Common myeloid progenitor, CD34-positive (primary cell): ENCODE measurements at regions of chr12 and their contacts with region 1.

Region 1: DNA sequence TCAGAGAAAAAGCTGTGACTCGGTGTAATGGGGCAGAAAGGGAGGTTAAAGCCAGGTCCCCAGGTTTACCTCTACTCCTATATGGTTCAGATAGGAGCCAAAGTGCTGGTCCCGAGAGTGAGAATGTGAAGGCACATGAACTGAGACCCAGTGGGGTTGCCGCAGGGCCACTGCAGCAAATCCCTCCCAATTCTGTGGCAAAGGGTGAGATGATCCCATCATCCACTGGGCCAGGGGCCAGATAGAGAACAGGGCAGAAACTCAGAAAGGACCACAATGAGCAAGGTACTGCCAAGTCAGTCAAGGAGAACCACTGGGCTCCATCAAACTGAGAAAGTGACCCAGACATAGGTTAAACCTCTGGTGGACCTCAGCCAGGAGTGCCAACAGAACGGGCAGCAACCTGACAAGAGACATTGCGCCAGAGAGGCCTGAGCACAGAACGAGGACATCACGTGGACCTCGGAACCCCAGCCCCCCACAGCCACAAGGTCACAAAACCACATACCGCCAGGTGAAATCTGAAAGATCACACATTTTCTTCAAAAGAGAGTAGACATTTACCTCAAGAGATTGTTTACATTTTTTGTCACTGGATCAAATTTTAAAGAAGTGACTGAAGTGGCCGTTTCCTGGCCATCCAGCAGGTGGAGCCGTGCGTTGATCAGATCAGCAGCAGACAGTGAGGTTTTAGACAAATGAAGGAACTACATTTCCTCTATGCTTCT is 20.5 kb upstream of the ITPR2 start:
- DNase-seq: peak; percentile 72 to 88 (median 85)
- H3K4me3 ChIP-seq: no peak overlapping the region
- H3K27ac ChIP-seq: no peak overlapping the region
- H3K4me1 ChIP-seq: peaks cover 2 to 17% (median 8%) of the 10 kb centered on the region in 4 experiments
- H3K27me3 ChIP-seq: no peaks in the 10 kb centered on the region

Region 2: DNA sequence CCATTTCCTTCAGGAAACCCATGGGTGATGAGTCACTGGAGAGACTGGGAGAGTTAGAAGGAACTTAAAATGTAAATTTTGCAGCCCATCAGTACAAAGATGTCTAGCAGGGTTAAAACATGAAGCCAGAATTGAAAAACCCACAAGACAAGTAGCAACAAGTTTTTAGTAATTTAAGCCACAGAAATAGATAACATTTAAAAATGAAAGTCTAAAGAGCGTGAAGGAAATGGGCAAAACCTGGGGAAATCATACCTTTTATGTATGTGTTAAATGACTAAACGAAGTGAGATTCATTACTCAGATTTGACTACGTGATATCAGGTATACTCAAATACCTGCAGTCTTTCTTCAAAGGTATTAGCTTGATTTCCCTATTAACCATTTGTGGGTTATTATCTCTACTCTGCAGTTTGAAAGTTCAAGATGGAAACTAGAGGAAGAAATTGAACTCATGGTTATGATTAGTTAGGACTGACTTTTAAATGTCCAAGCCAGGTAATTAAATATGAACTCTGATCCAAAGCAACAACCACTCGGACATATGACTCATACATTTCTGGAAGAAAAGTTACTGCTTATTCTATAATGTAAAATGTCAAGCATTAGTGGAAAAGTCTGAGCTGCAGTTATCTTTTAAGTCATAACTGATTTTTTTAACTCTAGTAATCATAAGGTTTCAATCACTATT is 104.6 kb before region 1 on chr12:
- CTCF ChIA-PET with region 1: no interaction called
- POLR2A ChIA-PET with region 1: no interaction called
- DNase-seq: peak; percentile 29 to 69 (median 58)
- H3K4me3 ChIP-seq: peak overlapping the region in 2 of 7 experiments; percentile 21 to 30
- H3K27ac ChIP-seq: no peak overlapping the region
- H3K4me1 ChIP-seq: peaks cover 15 to 41% (median 25%) of the 10 kb centered on the region in 4 experiments
- H3K27me3 ChIP-seq: no peaks in the 10 kb centered on the region

Region 3: GRCh38 chr12:26863502-26863901 is 10.0 kb after region 1 on chr12:
- CTCF ChIA-PET with region 1: interaction called, 14 read pairs
- POLR2A ChIA-PET with region 1: no interaction called
- DNase-seq: peak; percentile 43 to 58 (median 46)
- H3K4me3 ChIP-seq: no peak overlapping the region
- H3K27ac ChIP-seq: no peak overlapping the region
- H3K4me1 ChIP-seq: peaks cover 0 to 18% (median 11%) of the 10 kb centered on the region in 4 experiments
- H3K27me3 ChIP-seq: no peaks in the 10 kb centered on the region

Region 4: DNA sequence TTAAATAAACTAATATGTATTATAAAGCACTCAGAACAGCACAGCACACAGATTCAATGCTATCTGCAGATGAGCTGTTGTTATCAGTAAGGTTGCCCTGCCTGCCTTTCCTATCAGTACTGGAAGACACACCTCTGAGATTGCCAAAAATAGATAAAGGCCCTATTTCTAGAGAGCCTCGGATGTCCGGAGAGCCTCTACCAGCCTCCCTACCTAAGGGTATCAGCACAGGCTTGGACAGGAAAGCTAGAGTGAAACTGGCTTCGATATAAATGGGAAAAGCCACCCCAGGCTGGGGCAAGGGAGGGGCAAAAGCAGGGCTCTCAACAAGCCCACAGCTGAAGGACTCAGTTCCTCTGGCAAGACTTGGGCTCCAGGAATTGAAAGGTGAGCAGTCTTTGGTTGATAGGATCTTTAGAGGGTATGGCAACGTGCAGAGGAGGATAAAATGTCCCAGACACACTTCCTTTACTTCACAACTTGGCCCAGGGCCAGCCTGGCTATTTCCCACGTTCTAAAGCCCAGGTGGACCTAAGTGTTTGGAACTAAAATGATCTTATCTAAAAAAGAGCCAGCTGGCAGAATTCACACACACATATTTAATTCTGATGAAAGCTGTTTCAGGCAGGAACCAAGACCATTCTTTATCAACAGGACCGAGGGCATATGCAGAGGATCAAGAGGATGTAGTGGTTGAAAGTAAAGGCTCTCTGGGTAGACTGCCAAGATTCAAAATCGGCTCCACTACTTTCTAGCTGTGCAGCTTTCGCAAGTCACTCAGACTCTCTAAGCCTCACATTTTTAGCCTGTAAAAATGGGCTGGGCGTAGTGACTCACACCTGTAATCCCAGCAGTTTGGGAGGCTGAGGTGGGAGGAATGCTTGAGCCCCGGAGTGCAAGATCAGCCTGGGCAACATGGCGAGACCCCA is 17.3 kb after region 1 on chr12:
- CTCF ChIA-PET with region 1: interaction called, 32 read pairs
- POLR2A ChIA-PET with region 1: no interaction called
- DNase-seq: peak; percentile 50 to 91 (median 87)
- H3K4me3 ChIP-seq: peak overlapping the region in 4 of 7 experiments; percentile 3 to 53 (median 12)
- H3K27ac ChIP-seq: peak overlapping the region; percentile 8 to 60
- H3K4me1 ChIP-seq: peaks cover 12 to 54% (median 38%) of the 10 kb centered on the region in 4 experiments
- H3K27me3 ChIP-seq: no peaks in the 10 kb centered on the region

Region 5: GRCh38 chr12:26878661-26879119 is 25.2 kb after region 1 on chr12:
- CTCF ChIA-PET with region 1: interaction called, 36 read pairs
- POLR2A ChIA-PET with region 1: no interaction called
- DNase-seq: peak; percentile 36 to 86 (median 80)
- H3K4me3 ChIP-seq: no peak overlapping the region
- H3K27ac ChIP-seq: peak overlapping the region in 1 of 2 experiments; percentile 63
- H3K4me1 ChIP-seq: peaks cover 0 to 18% (median 7%) of the 10 kb centered on the region in 4 experiments
- H3K27me3 ChIP-seq: no peaks in the 10 kb centered on the region